ENCODE measurements at regions of chr2 and their contacts with region 1.

Region 1: DNA sequence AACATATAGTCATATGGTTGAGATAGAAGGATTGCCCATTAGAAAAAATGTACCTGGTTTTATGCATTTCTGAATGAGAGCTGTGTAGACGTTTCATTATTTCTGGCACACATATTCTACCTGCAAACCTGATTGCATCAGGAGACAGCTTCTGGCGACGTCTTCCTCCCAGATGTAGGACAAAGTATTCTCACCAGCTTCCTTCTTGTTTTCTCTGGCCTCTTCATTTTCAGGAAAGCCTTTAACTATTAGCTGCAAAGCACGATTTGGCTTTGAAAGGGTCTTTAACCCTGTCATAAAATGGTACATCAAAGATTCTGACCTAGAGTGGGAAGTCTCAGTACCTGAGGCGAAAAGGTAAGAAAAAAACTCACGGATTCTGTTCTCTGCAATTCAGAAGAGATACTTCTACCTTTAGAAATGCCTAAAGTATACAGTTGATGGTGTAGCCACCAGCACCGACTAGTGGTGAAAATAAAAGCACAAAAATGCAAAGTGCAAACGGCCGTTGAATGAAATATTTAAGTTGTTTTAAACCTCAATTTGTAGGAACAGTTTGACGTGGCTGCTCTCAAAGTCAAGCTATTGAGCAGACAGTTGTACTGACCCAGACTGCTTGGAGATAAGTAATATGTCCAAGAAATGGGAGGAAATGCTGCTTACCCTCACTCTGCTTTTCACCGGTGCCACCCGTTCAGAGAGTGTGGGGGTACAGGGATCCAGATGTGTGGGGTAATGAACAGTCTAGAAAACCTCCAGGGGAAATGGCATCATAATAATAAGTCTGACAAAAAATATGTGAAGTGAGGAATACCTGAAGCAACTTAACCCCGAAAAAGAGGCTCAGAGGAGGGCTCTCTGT is 20.2 kb downstream of the IL18RAP start:
- DNase-seq: peak; percentile 71
- ATAC-seq: peak; percentile 79
- H3K4me3 Mint-ChIP-seq: no peak overlapping the region
- H3K27ac Mint-ChIP-seq: peak overlapping the region; percentile 37
- H3K4me1 Mint-ChIP-seq: peaks cover 9% of the 10 kb centered on the region
- H3K27me3 Mint-ChIP-seq: no peaks in the 10 kb centered on the region
- CTCF ChIP-seq: peak; percentile 87

Region 2: GRCh38 chr2:101883863-101884262 is 559.3 kb before region 1 on chr2:
- CTCF ChIA-PET with region 1: interaction called, 6 read pairs
- POLR2A ChIA-PET with region 1: no interaction called
- intact Hi-C with region 1: loop called (anchors 10 kb)
- DNase-seq: peak; percentile 48
- ATAC-seq: peak; percentile 97
- H3K4me3 Mint-ChIP-seq: no peak overlapping the region
- H3K27ac Mint-ChIP-seq: no peak overlapping the region
- H3K4me1 Mint-ChIP-seq: peaks cover 7% of the 10 kb centered on the region
- H3K27me3 Mint-ChIP-seq: no peaks in the 10 kb centered on the region
- CTCF ChIP-seq: peak; percentile 58

Region 3: GRCh38 chr2:102013206-102014040 is 429.8 kb before region 1 on chr2:
- CTCF ChIA-PET with region 1: interaction called, 10 read pairs
- POLR2A ChIA-PET with region 1: no interaction called
- intact Hi-C with region 1: no loop called
- DNase-seq: peak; percentile 32
- ATAC-seq: peak; percentile 70
- H3K4me3 Mint-ChIP-seq: no peak overlapping the region
- H3K27ac Mint-ChIP-seq: peak overlapping the region; percentile 63
- H3K4me1 Mint-ChIP-seq: peaks cover 24% of the 10 kb centered on the region
- H3K27me3 Mint-ChIP-seq: no peaks in the 10 kb centered on the region
- CTCF ChIP-seq: no peak

Region 4: GRCh38 chr2:102251042-102251848 is 192.0 kb before region 1 on chr2:
- CTCF ChIA-PET with region 1: interaction called, 43 read pairs
- POLR2A ChIA-PET with region 1: no interaction called
- intact Hi-C with region 1: loop called (anchors 5 kb)
- DNase-seq: peak; percentile 75
- ATAC-seq: peak; percentile 70
- H3K4me3 Mint-ChIP-seq: peak overlapping the region; percentile 74
- H3K27ac Mint-ChIP-seq: peak overlapping the region; percentile 86
- H3K4me1 Mint-ChIP-seq: peaks cover 39% of the 10 kb centered on the region
- H3K27me3 Mint-ChIP-seq: peaks cover 7% of the 10 kb centered on the region
- CTCF ChIP-seq: peak; percentile 86

Region 5: GRCh38 chr2:102350137-102350793 is 92.9 kb before region 1 on chr2:
- CTCF ChIA-PET with region 1: interaction called, 11 read pairs
- POLR2A ChIA-PET with region 1: interaction called, 5 read pairs
- intact Hi-C with region 1: no loop called
- DNase-seq: no peak
- ATAC-seq: no peak
- H3K4me3 Mint-ChIP-seq: no peak overlapping the region
- H3K27ac Mint-ChIP-seq: no peak overlapping the region
- H3K4me1 Mint-ChIP-seq: peaks cover 4% of the 10 kb centered on the region
- H3K27me3 Mint-ChIP-seq: no peaks in the 10 kb centered on the region
- CTCF ChIP-seq: no peak

Region 6: DNA sequence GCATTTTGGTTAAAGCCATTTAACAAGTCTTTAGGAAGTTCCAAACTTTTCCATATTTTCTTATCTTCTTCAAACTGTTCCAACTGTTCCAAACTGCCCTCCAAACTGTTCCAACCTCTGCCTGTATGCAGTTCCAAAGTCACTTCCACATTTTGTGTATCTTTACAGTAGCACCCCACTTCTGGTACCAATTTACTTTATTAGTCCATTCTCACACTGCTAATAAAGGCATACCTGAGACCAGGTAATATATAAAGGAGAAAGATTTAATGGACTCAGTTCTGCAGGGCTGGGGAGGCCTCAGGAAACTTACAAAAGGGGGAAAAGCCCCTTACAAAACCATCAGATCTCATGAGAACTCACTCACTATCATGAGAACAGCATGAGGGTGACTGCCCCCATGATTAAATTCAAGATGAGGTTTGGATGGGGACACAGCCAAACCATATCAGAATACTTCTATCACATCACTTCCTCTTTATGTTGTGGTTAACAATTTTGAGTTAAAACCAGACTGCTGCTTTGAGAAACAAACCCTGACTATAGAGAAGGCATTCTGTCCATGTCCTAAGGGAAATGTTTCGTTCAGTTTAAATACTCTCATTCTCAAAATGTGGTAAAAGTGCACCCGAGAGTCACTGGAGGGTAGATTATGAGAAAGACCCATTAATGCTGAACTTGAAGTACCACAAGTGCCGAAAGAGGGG is 76.6 kb before region 1 on chr2:
- CTCF ChIA-PET with region 1: interaction called, 11 read pairs
- POLR2A ChIA-PET with region 1: interaction called, 4 read pairs
- intact Hi-C with region 1: no loop called
- DNase-seq: peak; percentile 41
- ATAC-seq: peak; percentile 52
- H3K4me3 Mint-ChIP-seq: peak overlapping the region; percentile 51
- H3K27ac Mint-ChIP-seq: peak overlapping the region; percentile 96
- H3K4me1 Mint-ChIP-seq: peaks cover 88% of the 10 kb centered on the region
- H3K27me3 Mint-ChIP-seq: no peaks in the 10 kb centered on the region
- CTCF ChIP-seq: no peak

Region 7: DNA sequence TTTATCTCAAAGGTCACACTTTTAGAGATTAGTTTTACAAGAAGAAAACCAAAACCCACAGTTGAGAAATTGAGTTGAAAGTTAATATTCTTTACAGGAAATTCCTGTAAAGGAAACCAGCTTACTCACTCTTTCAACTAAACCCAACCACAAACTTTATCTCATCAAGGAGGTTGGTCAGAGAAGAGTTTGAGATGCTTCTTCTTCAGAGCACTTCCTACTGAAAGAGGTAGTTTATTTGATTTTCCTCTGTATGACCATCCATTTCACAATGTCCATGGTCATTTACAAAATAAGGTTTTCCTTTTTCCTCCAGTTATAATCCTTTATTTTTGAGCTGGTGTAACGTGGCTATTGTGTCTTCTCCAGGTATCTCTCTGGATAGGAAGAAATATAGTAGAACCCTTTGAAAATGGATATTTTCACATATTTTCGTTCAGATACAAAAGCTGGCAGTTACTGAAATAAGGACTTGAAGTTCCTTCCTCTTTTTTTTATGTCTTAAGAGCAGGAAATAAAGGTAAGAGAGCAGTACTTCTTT is 24.7 kb before region 1 on chr2:
- CTCF ChIA-PET with region 1: interaction called, 23 read pairs
- POLR2A ChIA-PET with region 1: no interaction called
- intact Hi-C with region 1: no loop called
- DNase-seq: no peak
- ATAC-seq: peak; percentile 67
- H3K4me3 Mint-ChIP-seq: peak overlapping the region; percentile 74
- H3K27ac Mint-ChIP-seq: peak overlapping the region; percentile 98
- H3K4me1 Mint-ChIP-seq: peaks cover 59% of the 10 kb centered on the region
- H3K27me3 Mint-ChIP-seq: no peaks in the 10 kb centered on the region
- CTCF ChIP-seq: no peak

Measured in activated CD8-positive, alpha-beta T cell treated with anti-CD3 and anti-CD28 coated beads for 36 hours (primary cell).